ENCODE measurements at regions of chr7 and their contacts with region 1.

Region 1: GRCh38 chr7:84663224-84663623 is 468.6 kb upstream of the SEMA3A start:
- DNase-seq: no peak
- ATAC-seq: no peak
- H3K4me3 ChIP-seq: no peak overlapping the region
- H3K27ac ChIP-seq: no peak overlapping the region
- H3K4me1 ChIP-seq: no peaks in the 10 kb centered on the region
- H3K27me3 ChIP-seq: no peaks in the 10 kb centered on the region
- CTCF ChIP-seq: no peak

Region 2: DNA sequence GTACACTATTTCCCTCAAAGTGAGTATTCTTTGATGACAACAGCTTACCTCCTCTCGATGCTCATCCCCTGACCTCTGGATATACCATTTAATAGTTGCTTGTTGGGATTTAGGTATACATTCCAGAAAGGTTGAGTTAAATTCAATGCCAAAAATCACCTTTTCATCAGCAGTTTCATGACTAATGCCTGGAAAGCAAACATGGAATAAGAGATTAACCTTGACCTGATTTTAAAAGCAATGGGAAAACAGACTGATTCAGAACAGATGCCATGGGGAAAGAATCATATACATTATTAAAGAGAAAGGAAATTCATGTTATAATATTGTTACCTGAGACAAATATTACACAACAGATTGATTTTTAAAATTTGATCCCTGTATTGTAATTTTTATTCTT is 343.5 kb after region 1 on chr7:
- intact Hi-C with region 1: loop called in 1 of 2 experiments (anchors 5 kb)
- DNase-seq: no peak
- ATAC-seq: no peak
- H3K4me3 ChIP-seq: no peak overlapping the region
- H3K27ac ChIP-seq: no peak overlapping the region
- H3K4me1 ChIP-seq: no peaks in the 10 kb centered on the region
- H3K27me3 ChIP-seq: no peaks in the 10 kb centered on the region
- CTCF ChIP-seq: no peak

Measured in psoas muscle (tissue), 8 donors.